AG04450 (cell line): ENCODE measurements at regions of chr18 and their contacts with region 1.

Region 1: GRCh38 chr18:45621061-45621511 is 5.8 kb downstream of the SLC14A2 start:
- DNase-seq: no peak
- H3K4me3 ChIP-seq: no peak overlapping the region
- H3K27ac ChIP-seq: no peak overlapping the region
- H3K27me3 ChIP-seq: peaks cover 13% of the 10 kb centered on the region
- CTCF ChIP-seq: peak; percentile 99

Region 2: DNA sequence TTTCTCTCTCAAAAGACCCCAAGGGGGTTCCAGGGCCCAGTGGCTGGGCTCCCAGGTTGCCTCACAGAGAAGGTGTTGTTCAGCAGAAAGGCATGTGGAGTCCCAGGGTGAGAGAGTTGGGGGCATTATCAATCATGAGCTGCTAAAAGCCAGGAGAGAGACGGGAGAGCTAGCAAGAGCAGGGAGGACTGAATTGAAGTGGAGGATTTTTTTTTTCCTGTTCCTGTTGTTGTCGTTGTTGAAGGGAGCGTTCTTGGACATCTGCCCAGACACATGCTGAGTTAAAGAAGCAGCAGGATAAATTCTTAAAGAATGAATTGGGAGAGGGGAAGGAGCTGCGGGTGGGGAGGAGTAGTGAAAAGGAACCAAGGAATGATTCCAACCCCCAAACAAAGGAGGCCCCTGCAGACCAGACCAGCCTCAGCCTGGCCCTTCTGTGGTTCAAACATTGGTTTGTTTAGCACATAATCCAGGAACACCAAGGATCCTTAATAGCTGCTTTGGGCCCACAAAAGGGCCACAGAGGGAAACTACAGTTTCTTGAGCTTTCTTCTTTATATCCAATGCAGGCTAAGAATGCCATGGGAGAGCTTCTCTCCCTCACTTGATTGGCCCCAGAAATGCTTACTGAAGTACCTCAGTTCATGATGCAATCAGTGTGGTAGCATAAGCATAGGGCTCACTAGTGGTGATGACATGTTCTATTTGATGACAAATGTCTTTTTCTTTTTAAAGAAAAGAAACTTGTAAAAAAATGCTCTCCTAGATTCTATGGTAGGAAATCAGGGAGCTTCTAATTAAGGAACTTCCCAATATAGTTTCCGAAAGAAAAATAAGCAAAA is 794.4 kb before region 1 on chr18:
- CTCF ChIA-PET with region 1: interaction called, 13 read pairs
- POLR2A ChIA-PET with region 1: no interaction called
- DNase-seq: peak; percentile 79
- H3K4me3 ChIP-seq: no peak overlapping the region
- H3K27ac ChIP-seq: peak overlapping the region; percentile 66
- H3K27me3 ChIP-seq: no peaks in the 10 kb centered on the region
- CTCF ChIP-seq: no peak

Region 3: DNA sequence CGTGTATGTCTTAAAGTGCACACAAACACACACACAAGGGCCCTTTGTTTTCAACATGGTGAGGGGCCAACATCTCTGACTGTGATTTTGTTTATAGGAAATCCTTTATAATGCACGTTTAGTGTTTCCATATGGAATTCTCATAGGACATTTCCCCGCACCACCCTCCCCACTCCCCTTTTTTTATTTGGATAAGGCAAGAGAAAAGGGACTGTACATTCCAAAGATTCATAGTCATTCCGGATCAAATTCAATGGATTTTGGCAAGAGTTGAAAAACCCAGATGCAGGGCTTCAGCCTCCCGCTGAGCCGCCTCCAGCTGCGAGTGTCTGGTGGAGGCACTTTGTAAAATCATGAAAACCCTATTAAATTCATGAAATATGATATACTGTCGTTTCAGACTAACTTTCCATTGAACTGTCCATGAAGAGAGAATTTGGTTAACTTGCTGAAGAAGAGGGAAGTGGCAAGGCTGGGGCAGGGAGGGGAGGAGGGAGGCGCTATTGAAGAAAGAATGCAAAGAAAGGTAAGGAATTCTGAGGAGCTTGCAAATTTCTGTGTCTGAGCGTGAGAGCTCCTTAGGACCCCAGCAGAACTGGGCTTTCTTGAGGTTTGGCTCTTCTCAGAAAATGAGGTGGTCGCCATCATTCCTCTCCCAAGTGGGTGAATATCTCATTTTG is 31.6 kb before region 1 on chr18:
- CTCF ChIA-PET with region 1: interaction called, 10 read pairs
- POLR2A ChIA-PET with region 1: interaction called, 3 read pairs
- DNase-seq: peak; percentile 88
- H3K4me3 ChIP-seq: peak overlapping the region; percentile 27
- H3K27ac ChIP-seq: peak overlapping the region; percentile 97
- H3K27me3 ChIP-seq: no peaks in the 10 kb centered on the region
- CTCF ChIP-seq: no peak

Region 4: GRCh38 chr18:45608400-45608799 is 12.7 kb before region 1 on chr18:
- CTCF ChIA-PET with region 1: interaction called, 24 read pairs
- POLR2A ChIA-PET with region 1: interaction called, 3 read pairs
- DNase-seq: no peak
- H3K4me3 ChIP-seq: no peak overlapping the region
- H3K27ac ChIP-seq: no peak overlapping the region
- H3K27me3 ChIP-seq: peaks cover 30% of the 10 kb centered on the region
- CTCF ChIP-seq: no peak